ENCODE measurements at regions of chr18 and their contacts with region 1.

Region 1: DNA sequence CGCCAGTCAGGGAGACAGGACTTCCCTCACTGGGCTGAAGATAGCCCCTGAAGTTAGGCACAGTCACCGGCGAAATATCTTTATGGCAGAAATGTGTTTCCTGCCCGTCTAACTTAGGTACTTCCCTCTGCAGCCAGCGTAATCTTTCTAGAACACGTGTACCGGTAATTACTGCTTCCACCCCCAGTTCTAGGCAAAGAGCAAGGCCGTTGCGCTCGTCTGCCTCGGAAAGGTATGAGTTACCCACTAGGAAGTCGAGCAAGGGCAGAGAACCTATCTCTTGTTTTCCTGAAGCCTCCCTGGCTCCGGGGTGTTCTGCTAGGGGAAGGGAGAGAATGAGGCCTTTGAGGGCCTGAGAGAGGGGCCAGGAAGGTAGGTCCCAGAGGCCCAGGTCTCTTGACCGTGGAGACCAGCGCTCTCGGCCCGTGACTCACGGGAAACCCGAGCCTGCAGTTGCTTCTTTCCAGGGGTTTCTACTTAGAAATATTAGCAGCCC is 70.0 kb downstream of the TWSG1 start:
- DNase-seq: peak; percentile 55
- ATAC-seq: peak; percentile 53
- H3K4me3 ChIP-seq: peak overlapping the region; percentile 7 to 73 (median 64)
- H3K4me3 Mint-ChIP-seq: peak overlapping the region; percentile 93
- H3K27ac ChIP-seq: peak overlapping the region in 1 of 2 donors; percentile 72
- H3K27ac Mint-ChIP-seq: peak overlapping the region; percentile 64
- H3K4me1 ChIP-seq: peaks cover 6 to 13% of the 10 kb centered on the region in 2 donors
- H3K4me1 Mint-ChIP-seq: peaks cover 17% of the 10 kb centered on the region
- H3K27me3 ChIP-seq: no peaks in the 10 kb centered on the region
- H3K27me3 Mint-ChIP-seq: no peaks in the 10 kb centered on the region
- CTCF ChIP-seq: no peak

Region 2: GRCh38 chr18:9353596-9353995 is 51.0 kb before region 1 on chr18:
- CTCF ChIA-PET with region 1: no interaction called
- POLR2A ChIA-PET with region 1: no interaction called
- intact Hi-C with region 1: loop called (anchors 5 kb)
- DNase-seq: no peak
- ATAC-seq: no peak
- H3K4me3 ChIP-seq: no peak overlapping the region
- H3K4me3 Mint-ChIP-seq: no peak overlapping the region
- H3K27ac ChIP-seq: no peak overlapping the region
- H3K27ac Mint-ChIP-seq: no peak overlapping the region
- H3K4me1 ChIP-seq: peaks cover 0 to 3% of the 10 kb centered on the region in 2 donors
- H3K4me1 Mint-ChIP-seq: peaks cover 6% of the 10 kb centered on the region
- H3K27me3 ChIP-seq: no peaks in the 10 kb centered on the region
- H3K27me3 Mint-ChIP-seq: no peaks in the 10 kb centered on the region
- CTCF ChIP-seq: no peak

Region 3: GRCh38 chr18:9506046-9506792 is 101.6 kb after region 1 on chr18:
- CTCF ChIA-PET with region 1: no interaction called
- POLR2A ChIA-PET with region 1: no interaction called
- intact Hi-C with region 1: no loop called
- DNase-seq: no peak
- ATAC-seq: no peak
- H3K4me3 ChIP-seq: no peak overlapping the region
- H3K4me3 Mint-ChIP-seq: no peak overlapping the region
- H3K27ac ChIP-seq: no peak overlapping the region
- H3K27ac Mint-ChIP-seq: no peak overlapping the region
- H3K4me1 ChIP-seq: no peaks in the 10 kb centered on the region
- H3K4me1 Mint-ChIP-seq: peaks cover 34% of the 10 kb centered on the region
- H3K27me3 ChIP-seq: no peaks in the 10 kb centered on the region
- H3K27me3 Mint-ChIP-seq: no peaks in the 10 kb centered on the region
- CTCF ChIP-seq: no peak

Region 4: GRCh38 chr18:9688036-9688741 is 283.6 kb after region 1 on chr18:
- CTCF ChIA-PET with region 1: no interaction called
- POLR2A ChIA-PET with region 1: no interaction called
- intact Hi-C with region 1: no loop called
- DNase-seq: no peak
- ATAC-seq: no peak
- H3K4me3 ChIP-seq: no peak overlapping the region
- H3K4me3 Mint-ChIP-seq: no peak overlapping the region
- H3K27ac ChIP-seq: no peak overlapping the region
- H3K27ac Mint-ChIP-seq: no peak overlapping the region
- H3K4me1 ChIP-seq: no peaks in the 10 kb centered on the region
- H3K4me1 Mint-ChIP-seq: peaks cover 1% of the 10 kb centered on the region
- H3K27me3 ChIP-seq: peaks cover 0 to 3% (median 2%) of the 10 kb centered on the region in 4 experiments
- H3K27me3 Mint-ChIP-seq: peaks cover 10% of the 10 kb centered on the region
- CTCF ChIP-seq: no peak